ENCODE measurements at regions of chr5 and their contacts with region 1.

Region 1: GRCh38 chr5:125582352-125582751 is 835.9 kb upstream of the ZNF608 start:
- DNase-seq: peak in 1 of 2 donors; percentile 12
- ATAC-seq: peak in 7 of 8 donors; percentile 19 to 68 (median 59)
- H3K4me3 ChIP-seq: no peak overlapping the region
- H3K27ac ChIP-seq: no peak overlapping the region
- H3K4me1 ChIP-seq: peaks cover 0 to 26% (median 11%) of the 10 kb centered on the region in 9 donors
- H3K27me3 ChIP-seq: no peaks in the 10 kb centered on the region
- CTCF ChIP-seq: no peak

Region 2: DNA sequence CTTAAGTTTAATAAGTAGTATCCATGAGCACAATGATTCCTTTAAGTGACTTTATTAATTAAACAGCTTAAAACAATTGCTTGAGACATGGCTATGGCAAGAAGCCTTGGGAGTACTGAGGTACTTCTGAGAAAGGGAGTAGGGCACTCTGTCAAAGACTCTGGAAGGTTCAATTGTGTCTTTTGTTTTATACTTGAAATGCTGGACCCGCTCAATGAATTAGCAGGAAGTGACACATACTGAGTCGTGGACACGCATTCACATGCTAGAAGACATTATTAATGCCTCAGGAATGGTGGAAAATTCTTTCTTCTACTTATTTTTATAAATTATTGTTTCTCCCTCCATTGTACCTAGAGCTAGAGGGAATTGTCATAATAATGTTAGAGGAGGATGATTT is 488.6 kb before region 1 on chr5:
- intact Hi-C with region 1: loop called in 1 of 10 experiments (anchors 5 kb)
- DNase-seq: no peak
- ATAC-seq: no peak
- H3K4me3 ChIP-seq: no peak overlapping the region
- H3K27ac ChIP-seq: no peak overlapping the region
- H3K4me1 ChIP-seq: no peaks in the 10 kb centered on the region
- H3K27me3 ChIP-seq: no peaks in the 10 kb centered on the region
- CTCF ChIP-seq: no peak

Region 3: DNA sequence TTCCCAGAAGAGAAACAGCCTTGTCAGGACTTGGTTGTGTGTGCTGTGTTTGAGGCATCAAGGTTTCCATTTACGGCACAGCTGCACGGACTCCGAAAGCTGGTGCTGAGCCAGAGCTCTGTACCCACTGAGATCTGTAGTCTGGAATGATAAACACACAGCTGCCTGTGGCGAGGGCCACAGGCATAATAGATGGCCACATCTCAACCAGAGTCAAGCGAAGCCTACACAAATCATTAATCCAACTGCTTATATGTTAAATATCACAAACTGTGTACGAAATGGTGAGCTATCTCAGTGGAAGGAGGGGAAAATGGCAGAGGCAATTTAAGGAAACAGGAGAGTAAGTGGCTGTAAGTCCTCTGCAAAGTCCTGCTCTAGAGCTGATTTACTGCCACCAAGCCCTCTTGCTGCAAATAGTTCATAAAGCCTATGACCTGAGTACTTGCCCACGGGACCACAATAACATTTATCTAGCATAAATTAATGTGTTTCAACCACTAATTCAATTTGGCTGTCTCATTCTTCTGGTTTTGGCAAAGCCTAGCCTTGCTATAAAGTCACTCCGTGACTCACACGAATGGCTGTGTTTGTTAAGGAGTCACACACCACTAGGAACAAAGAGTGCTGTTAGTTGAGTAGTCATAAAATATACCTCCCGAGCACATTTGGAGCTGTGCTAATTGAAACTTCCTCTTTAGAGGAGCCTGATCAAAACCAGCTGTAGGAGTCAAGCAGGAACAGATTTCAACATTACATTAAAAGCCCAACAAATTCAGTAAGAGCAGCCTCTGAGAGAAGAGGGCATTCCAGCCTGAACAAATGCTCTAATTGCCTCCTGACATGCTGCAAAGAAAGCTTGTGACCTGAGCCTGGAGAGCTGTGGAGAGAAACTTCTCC is 97.4 kb before region 1 on chr5:
- intact Hi-C with region 1: loop called in 1 of 10 experiments (anchors 10 kb)
- DNase-seq: peak; percentile 48 to 52
- ATAC-seq: peak; percentile 87 to 95 (median 92)
- H3K4me3 ChIP-seq: peak overlapping the region in 1 of 10 donors; percentile 16
- H3K27ac ChIP-seq: peak overlapping the region in 9 of 10 donors; percentile 38 to 69 (median 57)
- H3K4me1 ChIP-seq: peaks cover 0 to 23% (median 14%) of the 10 kb centered on the region in 9 donors
- H3K27me3 ChIP-seq: no peaks in the 10 kb centered on the region
- CTCF ChIP-seq: no peak

Measured in heart right ventricle (tissue), 16 donors.